GM12878 (cell line): ENCODE measurements at regions of chr21 and their contacts with region 1.

Region 1: DNA sequence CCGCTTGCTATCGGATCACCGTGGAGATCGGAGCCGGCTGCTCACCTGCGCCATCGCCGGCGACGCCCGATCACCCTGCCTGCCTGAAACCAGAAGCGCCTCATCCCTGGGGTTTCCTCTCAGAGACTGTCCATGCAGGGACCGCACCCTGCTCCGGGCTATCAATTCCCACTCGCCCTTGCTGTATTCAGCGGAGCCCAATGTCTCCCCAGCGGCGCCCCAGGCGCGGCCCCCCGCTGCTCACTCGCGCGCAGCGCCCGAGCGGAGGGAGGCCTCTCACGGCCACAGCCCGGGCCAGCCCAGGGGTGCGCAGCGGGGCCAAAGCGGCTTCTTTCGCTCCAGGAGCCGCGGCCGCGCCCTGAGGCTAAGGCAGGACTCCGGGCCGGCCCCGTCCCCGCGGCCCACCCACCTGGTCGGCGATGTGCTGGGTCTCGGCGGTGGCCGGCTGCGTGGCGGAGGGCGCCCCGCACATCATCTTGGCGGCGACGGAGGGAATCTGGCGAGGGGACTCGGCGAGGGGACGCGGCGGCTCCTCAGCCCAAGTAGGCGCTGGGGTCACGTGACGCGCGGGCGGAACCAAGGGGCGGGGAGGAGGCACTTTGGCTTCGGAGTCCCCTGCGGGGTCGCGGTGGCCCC is at the start of gene CSTB:
- DNase-seq: no peak
- ATAC-seq: peak; percentile 77
- H3K4me3 ChIP-seq: peak within 1 kb of the TSS; percentile 83
- H3K27ac ChIP-seq: peak within 1 kb of the TSS; percentile 58
- H3K4me1 ChIP-seq: peaks cover 9% of the 10 kb centered on the region
- H3K27me3 ChIP-seq: no peaks in the 10 kb centered on the region
- CTCF ChIP-seq: no peak
- EP300 ChIP-seq: no peak; a peak in 1 of 4 replicates
- POLR2A ChIP-seq: peak; percentile 95
- RAD21 ChIP-seq: no peak
- polyA plus RNA-seq, gene CSTB: 12.5 to 20.2 TPM

Region 2: GRCh38 chr21:43728467-43729390 is 47.2 kb before region 1 on chr21:
- CTCF ChIA-PET with region 1: interaction called, 9 read pairs
- POLR2A ChIA-PET with region 1: no interaction called
- RAD21 ChIA-PET with region 1: interaction called, 3 read pairs
- SMC1A ChIA-PET with region 1: interaction called, 4 read pairs
- in situ Hi-C with region 1: no loop called
- intact Hi-C with region 1: loop called (anchors 5 kb)
- DNase-seq: peak; percentile 64
- ATAC-seq: peak; percentile 89
- H3K4me3 ChIP-seq: peak overlapping the region; percentile 80
- H3K27ac ChIP-seq: peak overlapping the region; percentile 49
- H3K4me1 ChIP-seq: peaks cover 47% of the 10 kb centered on the region
- H3K27me3 ChIP-seq: no peaks in the 10 kb centered on the region
- CTCF ChIP-seq: peak in 2 of 3 experiments; percentile 7 to 22; a peak in 2 of 6 replicates
- EP300 ChIP-seq: peak; percentile 16 to 57; a peak in 2 of 4 replicates
- POLR2A ChIP-seq: peak; percentile 85
- RAD21 ChIP-seq: no peak

Region 3: GRCh38 chr21:43789276-43790009 is 13.5 kb after region 1 on chr21 and contains the start of gene RRP1:
- CTCF ChIA-PET with region 1: interaction called, 8 read pairs
- POLR2A ChIA-PET with region 1: interaction called, 8 read pairs
- RAD21 ChIA-PET with region 1: interaction called, 3 read pairs
- SMC1A ChIA-PET with region 1: interaction called, 10 read pairs
- in situ Hi-C with region 1: no loop called
- intact Hi-C with region 1: no loop called
- DNase-seq: peak; percentile 59
- ATAC-seq: peak; percentile 94
- H3K4me3 ChIP-seq: peak within 1 kb of the TSS; percentile 97
- H3K27ac ChIP-seq: peak within 1 kb of the TSS; percentile 62
- H3K4me1 ChIP-seq: 0 out of 2 replicates have a peak, but pooled peaks cover 3% of the 10 kb centered on the region
- H3K27me3 ChIP-seq: no peaks in the 10 kb centered on the region
- CTCF ChIP-seq: peak; percentile 88 to 100 (median 99); a peak in 5 of 6 replicates
- EP300 ChIP-seq: 0 out of 4 replicates have a peak, but pooled peaks of 1 of the 2 experiments have one; percentile 17
- POLR2A ChIP-seq: peak; percentile 95
- RAD21 ChIP-seq: peak; percentile 34; the same call in 1 of the 2 replicates
- polyA plus RNA-seq, gene RRP1: 0.34 to 4.3 TPM

Region 4: GRCh38 chr21:43949499-43950208 is 173.7 kb after region 1 on chr21:
- CTCF ChIA-PET with region 1: no interaction called
- POLR2A ChIA-PET with region 1: no interaction called
- RAD21 ChIA-PET with region 1: no interaction called
- SMC1A ChIA-PET with region 1: no interaction called
- in situ Hi-C with region 1: no loop called
- intact Hi-C with region 1: no loop called
- DNase-seq: no peak
- ATAC-seq: no peak
- H3K4me3 ChIP-seq: no peak overlapping the region
- H3K27ac ChIP-seq: peak overlapping the region; percentile 61
- H3K4me1 ChIP-seq: peaks cover 8% of the 10 kb centered on the region
- H3K27me3 ChIP-seq: no peaks in the 10 kb centered on the region
- CTCF ChIP-seq: no peak
- EP300 ChIP-seq: no peak
- POLR2A ChIP-seq: no peak
- RAD21 ChIP-seq: no peak

Region 5: DNA sequence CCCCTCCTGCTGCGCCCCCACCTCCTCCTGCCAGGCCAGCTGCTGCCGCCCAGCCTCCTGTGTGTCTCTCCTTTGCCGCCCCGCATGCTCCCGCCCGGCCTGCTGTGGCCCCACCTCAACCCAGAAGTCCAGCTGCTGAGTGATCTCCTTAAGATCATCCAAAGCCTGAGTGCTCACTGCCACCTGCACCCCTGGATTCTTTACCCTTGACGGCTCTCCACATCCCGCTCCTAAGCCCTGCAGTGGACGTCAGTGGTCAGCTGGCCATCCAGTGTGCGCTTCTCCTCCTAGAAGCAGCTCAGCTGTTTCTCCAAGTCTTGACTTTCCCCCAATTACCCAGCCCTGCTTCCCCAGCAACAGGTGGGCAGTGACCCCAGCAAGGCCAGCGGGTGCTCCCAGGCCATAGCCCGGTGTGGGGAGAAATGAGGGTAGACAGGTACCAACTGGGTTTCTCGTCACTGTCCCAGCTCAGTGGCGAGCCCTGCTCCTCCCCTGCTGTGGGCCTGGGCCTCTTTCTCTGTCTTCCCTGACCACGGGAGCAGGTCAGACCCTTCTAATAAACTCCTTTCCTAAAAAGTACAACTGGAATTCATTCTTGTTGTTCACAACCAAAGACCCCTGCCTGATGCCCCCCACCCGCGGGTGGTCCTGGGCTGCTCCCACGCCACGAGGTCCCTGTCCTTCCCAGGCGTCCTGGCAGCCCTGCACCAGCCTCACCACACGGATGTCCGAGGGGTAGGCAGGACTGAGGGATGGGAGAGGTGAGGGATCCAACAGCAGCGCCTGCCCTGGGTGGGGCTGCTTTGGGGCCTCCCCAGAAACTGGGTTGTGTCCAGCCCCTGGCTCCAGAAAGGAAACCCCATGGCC is 825.9 kb after region 1 on chr21:
- CTCF ChIA-PET with region 1: no interaction called
- POLR2A ChIA-PET with region 1: no interaction called
- RAD21 ChIA-PET with region 1: no interaction called
- SMC1A ChIA-PET with region 1: no interaction called
- in situ Hi-C with region 1: no loop called
- intact Hi-C with region 1: no loop called
- DNase-seq: no peak
- ATAC-seq: no peak
- H3K4me3 ChIP-seq: no peak overlapping the region
- H3K27ac ChIP-seq: no peak overlapping the region
- H3K4me1 ChIP-seq: no peaks in the 10 kb centered on the region
- H3K27me3 ChIP-seq: no peaks in the 10 kb centered on the region
- CTCF ChIP-seq: no peak
- EP300 ChIP-seq: no peak
- POLR2A ChIP-seq: no peak
- RAD21 ChIP-seq: no peak